Activated CD4-positive, alpha-beta memory T cell treated with anti-CD3 and anti-CD28 coated beads for 36 hours (primary cell): ENCODE measurements at regions of chr1 and their contacts with region 1.

Region 1: DNA sequence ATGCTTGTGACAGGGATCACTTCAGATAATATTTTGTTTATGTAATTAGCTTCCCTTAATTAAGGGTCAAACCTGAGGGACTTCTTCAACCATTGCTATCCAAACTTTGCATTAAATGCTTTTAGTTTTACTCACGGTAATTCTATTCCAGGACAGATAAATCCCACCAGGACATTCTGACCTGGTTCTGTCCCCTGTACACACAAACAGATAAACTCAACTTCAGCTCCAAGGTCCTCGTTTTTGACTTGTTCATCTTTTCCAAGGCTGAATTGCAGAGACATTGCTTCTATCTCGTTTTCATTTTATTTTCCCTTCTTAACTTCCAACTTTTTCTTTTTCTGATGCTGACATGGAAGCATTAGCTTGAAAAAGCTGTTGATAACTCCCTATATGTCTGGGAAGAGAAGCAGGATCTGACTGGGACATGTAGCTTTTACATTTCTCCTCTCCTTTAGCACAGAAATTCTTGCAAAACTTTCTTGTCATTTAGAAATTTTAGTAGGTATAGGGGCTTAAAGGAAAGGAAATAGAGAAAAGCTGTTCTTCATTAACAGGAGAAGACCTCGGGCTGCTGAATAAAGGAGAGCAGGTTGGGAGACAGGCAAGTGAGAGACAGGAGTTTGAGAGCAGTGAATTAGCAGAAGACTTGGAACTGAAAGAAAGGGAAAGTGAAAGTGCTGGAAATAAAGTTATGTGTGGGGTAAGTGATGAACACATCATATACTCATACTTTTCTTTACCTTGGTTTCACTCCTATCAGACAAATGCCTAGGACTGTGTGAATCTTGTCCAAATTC is 231.7 kb upstream of the B3GALT2 start:
- DNase-seq: no peak
- H3K4me3 Mint-ChIP-seq: peak overlapping the region; percentile 21
- H3K27ac Mint-ChIP-seq: peak overlapping the region; percentile 24
- H3K4me1 Mint-ChIP-seq: peaks cover 30% of the 10 kb centered on the region
- H3K27me3 Mint-ChIP-seq: no peaks in the 10 kb centered on the region

Region 2: DNA sequence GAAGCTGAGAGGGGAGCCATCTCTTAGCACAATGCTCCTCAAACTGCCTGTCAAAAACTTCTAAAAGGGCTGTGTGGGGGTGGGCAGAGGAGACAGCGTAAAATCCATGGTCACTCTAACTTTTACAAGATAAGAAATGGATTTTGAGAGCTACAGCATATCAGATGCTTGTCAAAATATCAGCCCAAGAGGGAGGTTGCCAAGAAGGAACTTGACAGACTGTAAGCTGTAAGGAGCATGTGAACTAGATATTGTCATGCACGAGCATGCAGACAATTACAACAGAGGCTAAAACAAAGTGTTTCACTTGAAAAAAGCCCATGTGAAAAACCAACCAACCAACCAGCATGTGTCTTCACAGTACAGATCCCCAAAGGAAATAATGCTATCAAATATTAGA is 124.4 kb before region 1 on chr1:
- CTCF ChIA-PET with region 1: no interaction called
- POLR2A ChIA-PET with region 1: no interaction called
- intact Hi-C with region 1: no loop called
- DNase-seq: no peak
- H3K4me3 Mint-ChIP-seq: no peak overlapping the region
- H3K27ac Mint-ChIP-seq: no peak overlapping the region
- H3K4me1 Mint-ChIP-seq: no peaks in the 10 kb centered on the region
- H3K27me3 Mint-ChIP-seq: no peaks in the 10 kb centered on the region

Region 3: GRCh38 chr1:193368302-193368701 is 49.8 kb before region 1 on chr1:
- CTCF ChIA-PET with region 1: no interaction called
- POLR2A ChIA-PET with region 1: no interaction called
- intact Hi-C with region 1: no loop called
- DNase-seq: no peak
- H3K4me3 Mint-ChIP-seq: peak overlapping the region; percentile 60
- H3K27ac Mint-ChIP-seq: peak overlapping the region; percentile 39
- H3K4me1 Mint-ChIP-seq: peaks cover 18% of the 10 kb centered on the region
- H3K27me3 Mint-ChIP-seq: no peaks in the 10 kb centered on the region

Region 4: DNA sequence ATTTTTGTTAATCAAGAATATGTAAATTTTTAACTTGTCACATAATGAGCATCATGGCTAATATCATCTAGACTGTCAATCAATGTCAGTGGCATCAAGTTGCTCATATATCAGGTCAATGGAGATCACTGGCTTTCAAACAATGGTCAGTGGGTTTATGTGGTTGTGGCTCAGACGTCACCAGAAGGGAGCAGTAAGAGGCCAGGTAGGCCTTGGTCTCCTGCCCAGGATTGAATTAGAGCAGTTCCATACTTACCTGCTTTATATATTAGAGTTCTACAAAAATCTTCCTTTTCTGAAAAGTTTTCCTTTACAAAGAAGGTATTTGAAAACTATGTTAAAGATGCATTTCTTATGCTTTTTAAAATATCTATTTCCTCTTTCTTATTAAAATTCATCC is 25.5 kb before region 1 on chr1:
- CTCF ChIA-PET with region 1: no interaction called
- POLR2A ChIA-PET with region 1: no interaction called
- intact Hi-C with region 1: no loop called
- DNase-seq: no peak
- H3K4me3 Mint-ChIP-seq: no peak overlapping the region
- H3K27ac Mint-ChIP-seq: no peak overlapping the region
- H3K4me1 Mint-ChIP-seq: peaks cover 4% of the 10 kb centered on the region
- H3K27me3 Mint-ChIP-seq: no peaks in the 10 kb centered on the region

Region 5: GRCh38 chr1:193448682-193449461 is 30.7 kb after region 1 on chr1:
- CTCF ChIA-PET with region 1: no interaction called
- POLR2A ChIA-PET with region 1: no interaction called
- intact Hi-C with region 1: loop called (anchors 2 kb)
- DNase-seq: peak; percentile 44
- H3K4me3 Mint-ChIP-seq: peak overlapping the region; percentile 1
- H3K27ac Mint-ChIP-seq: peak overlapping the region; percentile 80
- H3K4me1 Mint-ChIP-seq: peaks cover 22% of the 10 kb centered on the region
- H3K27me3 Mint-ChIP-seq: no peaks in the 10 kb centered on the region

Region 6: DNA sequence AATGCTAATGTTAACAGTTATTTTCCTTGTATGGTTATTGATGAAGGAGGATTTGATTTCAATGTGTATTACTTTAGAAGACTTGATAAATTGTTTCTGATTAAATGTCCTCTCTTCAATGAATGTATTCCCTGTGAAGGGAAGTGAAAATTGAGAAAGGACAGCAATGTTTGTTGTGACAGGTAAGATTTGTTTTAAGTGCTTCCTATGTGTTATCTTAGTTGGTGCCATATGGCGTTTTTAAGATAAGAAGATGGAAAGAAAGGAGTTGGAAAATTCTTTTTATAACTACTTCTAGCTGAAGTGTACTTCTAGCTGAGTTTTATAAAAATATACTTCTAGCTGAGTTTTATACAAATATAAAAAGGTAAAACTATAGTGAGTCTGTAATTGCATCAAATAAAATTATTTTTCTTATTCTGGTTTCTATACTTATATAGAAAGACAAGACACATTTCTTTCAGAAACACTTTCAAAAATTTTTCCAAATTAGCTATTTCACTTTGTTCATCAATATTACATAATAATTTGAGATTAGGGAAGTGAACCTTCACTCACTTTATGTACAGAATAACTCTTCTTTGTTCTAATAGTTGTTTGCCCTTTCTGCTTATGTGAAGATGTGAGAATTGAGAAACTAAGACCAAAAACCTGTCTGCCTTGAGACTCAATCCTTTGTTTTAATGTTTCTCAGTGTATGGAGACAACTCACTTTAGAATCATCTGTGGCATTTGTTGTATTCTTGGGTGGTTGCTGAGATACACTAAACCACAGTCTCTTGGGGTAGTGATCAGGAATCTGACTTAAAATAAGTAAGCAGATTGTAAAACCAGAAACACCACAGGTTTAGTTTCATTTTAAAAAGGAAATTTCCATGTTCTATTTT is 151.2 kb after region 1 on chr1:
- CTCF ChIA-PET with region 1: no interaction called
- POLR2A ChIA-PET with region 1: no interaction called
- intact Hi-C with region 1: loop called (anchors 1 kb)
- DNase-seq: no peak
- H3K4me3 Mint-ChIP-seq: no peak overlapping the region
- H3K27ac Mint-ChIP-seq: peak overlapping the region; percentile 73
- H3K4me1 Mint-ChIP-seq: peaks cover 29% of the 10 kb centered on the region
- H3K27me3 Mint-ChIP-seq: no peaks in the 10 kb centered on the region

Region 7: GRCh38 chr1:193700710-193701355 is 282.7 kb after region 1 on chr1:
- CTCF ChIA-PET with region 1: no interaction called
- POLR2A ChIA-PET with region 1: no interaction called
- intact Hi-C with region 1: loop called (anchors 5 kb)
- DNase-seq: no peak
- H3K4me3 Mint-ChIP-seq: no peak overlapping the region
- H3K27ac Mint-ChIP-seq: peak overlapping the region; percentile 40
- H3K4me1 Mint-ChIP-seq: peaks cover 21% of the 10 kb centered on the region
- H3K27me3 Mint-ChIP-seq: no peaks in the 10 kb centered on the region